ENCODE measurements at regions of chr19 and their contacts with region 1.

Region 1: DNA sequence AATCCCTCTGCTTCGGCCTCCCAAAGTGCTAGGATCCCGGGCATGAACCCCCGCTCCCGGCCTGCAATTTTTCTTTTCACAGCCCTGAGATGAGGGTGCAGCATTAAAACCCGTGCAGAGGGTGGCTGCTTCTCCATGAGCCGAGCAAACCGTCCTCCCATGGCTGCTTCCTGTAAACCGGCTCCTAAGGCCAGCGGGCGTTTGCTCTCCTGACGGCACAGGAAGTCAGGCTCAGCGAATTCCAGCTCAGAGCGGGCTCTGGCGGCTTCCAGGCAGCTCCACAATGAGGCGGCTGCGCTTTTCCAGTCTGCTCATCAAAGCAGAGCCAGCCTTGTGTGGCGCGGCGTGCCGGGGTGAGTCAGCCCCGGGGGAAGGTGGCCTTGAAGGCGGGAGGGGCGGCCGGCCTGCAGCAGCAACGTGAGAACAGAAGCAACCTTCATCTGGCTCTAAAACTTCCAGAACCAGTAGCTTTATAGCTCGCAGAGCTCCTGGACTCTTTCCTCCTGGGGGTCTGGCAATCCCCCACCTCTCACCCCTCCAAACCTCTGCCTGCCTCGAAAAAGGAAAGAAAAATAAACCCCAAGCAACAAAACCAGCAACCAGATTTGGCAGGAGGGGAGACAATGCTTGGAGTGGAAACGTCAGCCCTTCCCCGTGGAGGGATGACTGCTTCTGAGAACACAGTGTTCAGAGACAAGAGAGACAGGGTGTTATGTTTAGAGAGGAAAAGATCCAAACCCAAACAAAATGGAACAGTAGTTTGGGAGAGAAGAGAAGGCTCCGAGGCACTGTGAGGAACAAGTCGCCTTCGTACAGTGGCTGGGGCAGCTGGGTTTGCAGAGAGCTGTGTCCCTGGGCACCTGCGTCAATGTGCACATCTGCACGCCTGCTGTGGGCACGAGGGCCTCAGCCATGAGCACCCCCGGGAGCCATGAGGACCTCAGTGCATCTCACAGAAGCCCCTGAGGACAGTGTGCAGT is 67.8 kb downstream of the GADD45B start:
- DNase-seq: peak; percentile 93
- H3K4me3 ChIP-seq: peak overlapping the region; percentile 30
- CTCF ChIP-seq: peak; percentile 57

Region 2: GRCh38 chr19:2516727-2517126 is 27.0 kb before region 1 on chr19:
- CTCF ChIA-PET with region 1: no interaction called
- POLR2A ChIA-PET with region 1: no interaction called
- DNase-seq: no peak
- H3K4me3 ChIP-seq: no peak overlapping the region
- CTCF ChIP-seq: no peak

Region 3: DNA sequence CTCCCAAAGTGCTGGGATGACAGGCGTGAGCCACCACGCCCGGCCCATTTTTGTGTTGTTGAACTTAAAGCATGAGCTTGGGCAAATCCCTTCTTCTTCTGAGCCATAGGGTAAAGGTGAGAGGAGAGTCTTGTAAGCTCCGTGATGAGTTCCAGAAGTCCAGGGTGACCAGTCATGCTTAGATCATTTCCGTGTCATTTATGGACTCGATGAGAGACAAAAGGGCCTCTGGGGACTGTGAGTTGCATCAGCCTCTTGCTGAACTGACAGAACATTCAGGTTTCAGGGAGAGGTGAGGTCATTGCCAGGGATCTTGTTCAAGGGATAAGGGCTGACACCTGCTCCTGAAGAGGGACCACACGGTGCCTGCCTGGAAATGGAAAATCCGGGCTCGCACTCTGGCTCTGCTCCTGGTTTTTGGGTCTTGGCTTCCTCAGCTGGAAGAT is 14.3 kb before region 1 on chr19:
- CTCF ChIA-PET with region 1: interaction called, 21 read pairs
- POLR2A ChIA-PET with region 1: interaction called, 15 read pairs
- DNase-seq: peak; percentile 82
- H3K4me3 ChIP-seq: no peak overlapping the region
- CTCF ChIP-seq: no peak

Region 4: GRCh38 chr19:2578901-2579677 is 35.3 kb after region 1 on chr19:
- CTCF ChIA-PET with region 1: interaction called, 17 read pairs
- POLR2A ChIA-PET with region 1: interaction called, 25 read pairs
- DNase-seq: peak; percentile 65
- H3K4me3 ChIP-seq: peak overlapping the region; percentile 64
- CTCF ChIP-seq: peak; percentile 98

Region 5: DNA sequence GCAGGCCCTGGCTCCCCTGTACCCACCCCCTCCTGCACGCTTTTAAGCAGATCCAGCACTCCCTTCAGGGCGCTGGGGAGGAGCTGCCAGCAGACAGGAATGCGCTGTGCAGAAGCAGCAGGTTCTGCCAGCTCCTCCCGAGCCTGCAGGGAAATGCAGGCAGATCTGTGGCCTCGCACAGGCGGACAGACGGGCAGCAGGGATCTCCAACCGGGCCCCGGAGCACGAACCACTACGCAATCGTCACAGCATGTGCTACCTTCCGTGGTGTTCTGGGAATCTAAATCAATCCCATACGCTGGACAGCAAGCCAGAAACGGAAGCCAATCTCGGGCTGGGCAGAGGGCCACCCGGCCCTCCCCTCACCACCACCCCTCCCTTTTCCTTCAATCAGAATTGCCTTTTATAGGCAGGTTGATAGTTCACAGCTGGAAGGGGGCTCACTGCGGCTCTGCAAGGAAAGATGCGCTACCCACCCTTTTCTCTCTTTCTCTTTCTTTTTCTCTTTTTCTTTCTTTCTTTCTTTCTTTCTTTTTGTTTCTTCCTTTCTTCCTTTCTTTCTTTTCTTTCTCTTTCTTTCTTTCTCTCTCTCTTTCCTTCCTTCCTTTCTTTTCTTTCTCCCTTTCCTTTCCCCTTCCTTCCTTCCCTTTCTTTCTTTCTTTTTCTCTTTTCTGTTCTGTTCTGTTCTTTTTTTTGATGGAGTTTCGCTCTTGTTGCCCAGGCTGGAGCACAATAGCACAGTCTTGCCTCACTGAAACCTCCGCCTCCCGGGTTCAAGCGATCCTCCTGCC is 58.8 kb after region 1 on chr19:
- CTCF ChIA-PET with region 1: interaction called, 7 read pairs
- POLR2A ChIA-PET with region 1: interaction called, 13 read pairs
- DNase-seq: peak; percentile 93
- H3K4me3 ChIP-seq: peak overlapping the region; percentile 24
- CTCF ChIP-seq: peak; percentile 26

Region 6: DNA sequence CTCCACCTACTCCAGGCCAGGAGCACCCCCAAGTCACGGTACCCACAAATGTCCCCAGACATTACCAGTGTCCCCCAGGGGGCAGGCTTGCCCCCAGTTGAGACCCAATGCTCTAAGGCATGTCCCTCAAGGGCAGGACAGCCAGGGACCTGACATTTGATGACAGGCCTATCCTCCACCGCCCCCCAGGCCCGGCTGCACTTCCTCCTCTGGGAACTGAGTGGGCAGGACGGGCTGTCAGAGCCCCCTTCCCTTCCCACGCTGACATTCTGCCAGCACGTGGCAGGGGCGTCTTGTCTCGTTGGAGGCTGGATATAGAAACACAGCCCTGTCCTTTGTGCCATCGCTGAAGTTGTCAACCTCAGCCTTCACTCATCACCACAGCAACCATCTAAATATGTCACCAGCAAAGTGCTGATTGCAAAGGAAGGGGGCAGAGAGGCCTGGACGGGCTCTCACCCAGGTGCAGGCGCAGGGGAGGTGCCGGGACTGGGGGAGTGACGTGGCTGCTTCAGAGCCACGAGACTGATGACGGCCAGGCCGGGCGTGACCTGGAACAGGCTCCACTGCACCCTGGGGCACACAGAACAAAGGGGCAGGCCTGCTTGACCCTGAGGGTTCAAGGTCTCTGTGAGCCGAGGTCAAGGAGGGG is 120.3 kb after region 1 on chr19:
- CTCF ChIA-PET with region 1: no interaction called
- POLR2A ChIA-PET with region 1: no interaction called
- DNase-seq: no peak
- H3K4me3 ChIP-seq: no peak overlapping the region
- CTCF ChIP-seq: no peak

Measured in AG04449 (cell line).